Activated B cell treated with CpG ODN at 0.5 μM for 24 hours (primary cell): ENCODE measurements at regions of chr14 and their contacts with region 1.

Region 1: GRCh38 chr14:61694830-61695694 is at the start of gene HIF1A:
- DNase-seq: peak; percentile 87
- ATAC-seq: peak; percentile 95
- H3K4me3 Mint-ChIP-seq: peak within 1 kb of the TSS; percentile 97
- H3K27ac Mint-ChIP-seq: peak within 1 kb of the TSS; percentile 95
- H3K4me1 Mint-ChIP-seq: peaks cover 40% of the 10 kb centered on the region
- H3K27me3 Mint-ChIP-seq: no peaks in the 10 kb centered on the region
- CTCF ChIP-seq: no peak
- total RNA-seq, gene HIF1A: 148 and 179 TPM in 2 replicates

Region 2: DNA sequence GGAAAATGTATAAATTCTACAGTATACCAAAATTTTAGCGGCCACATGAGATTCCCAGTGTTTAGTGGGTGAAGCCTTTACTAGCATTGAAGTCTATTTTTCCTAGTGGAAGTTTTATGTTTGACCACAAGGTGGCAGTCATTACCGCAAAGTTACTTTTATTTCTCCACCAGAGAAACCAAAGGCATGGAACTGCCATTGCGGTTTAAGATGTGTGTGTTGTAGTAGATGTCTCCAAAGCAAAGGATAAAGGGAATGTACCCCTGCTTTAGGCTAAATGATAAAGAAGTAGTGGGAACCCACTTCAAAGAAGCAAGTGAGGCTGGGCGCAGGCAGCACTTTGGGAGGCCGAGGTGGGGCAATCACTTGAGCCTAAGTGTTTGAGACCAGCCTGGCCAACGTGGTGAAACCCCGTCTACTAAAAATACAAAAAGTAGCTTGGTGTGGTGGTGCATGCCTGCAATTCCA is 233.2 kb before region 1 on chr14:
- CTCF ChIA-PET with region 1: interaction called, 4 read pairs
- POLR2A ChIA-PET with region 1: no interaction called
- intact Hi-C with region 1: loop called (anchors 1 kb)
- DNase-seq: no peak
- ATAC-seq: peak; percentile 68
- H3K4me3 Mint-ChIP-seq: no peak overlapping the region
- H3K27ac Mint-ChIP-seq: no peak overlapping the region
- H3K4me1 Mint-ChIP-seq: peaks cover 16% of the 10 kb centered on the region
- H3K27me3 Mint-ChIP-seq: no peaks in the 10 kb centered on the region
- CTCF ChIP-seq: no peak

Region 3: DNA sequence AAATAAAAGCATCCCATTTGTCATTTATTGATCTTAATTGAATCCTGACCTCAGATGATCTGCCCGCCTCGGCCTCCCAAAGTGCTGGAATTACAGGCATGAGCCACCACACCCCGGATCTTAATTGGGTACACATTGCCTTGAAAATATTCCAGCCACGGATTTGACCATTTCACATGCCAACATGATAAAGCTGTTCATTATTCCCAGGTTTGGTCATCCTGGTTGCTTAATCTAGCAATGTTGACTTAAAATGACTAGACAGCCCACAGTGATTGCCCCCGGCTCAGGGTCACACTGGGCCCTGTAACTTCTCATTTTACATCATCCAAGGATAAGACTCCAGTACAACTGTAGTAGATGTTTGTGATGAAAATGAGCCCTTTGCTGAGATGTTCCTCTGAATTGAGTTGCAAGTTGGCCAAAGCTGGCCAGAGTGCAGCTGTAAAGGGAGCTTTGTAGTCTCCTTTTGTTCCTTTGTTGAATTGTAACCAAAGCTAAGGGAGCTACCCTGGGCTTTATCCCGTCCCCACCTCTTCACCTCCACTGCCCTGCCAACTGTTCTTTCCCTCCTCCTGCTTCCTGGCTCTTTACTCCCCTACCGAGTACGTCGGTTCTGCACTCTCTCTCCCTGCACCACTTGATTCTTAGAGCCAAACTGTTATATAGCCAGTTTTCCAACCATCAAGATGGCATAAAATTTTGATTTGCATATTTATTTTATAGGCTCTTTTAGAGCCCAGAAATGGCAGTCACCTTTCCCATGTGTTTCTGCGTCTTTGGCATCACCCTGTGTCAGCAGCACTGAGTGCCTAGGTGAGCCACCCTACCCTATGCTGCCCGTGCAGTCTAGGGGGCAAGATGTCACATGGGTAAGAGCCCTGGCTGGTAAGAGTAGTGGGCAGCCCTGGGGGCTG is 141.1 kb before region 1 on chr14:
- CTCF ChIA-PET with region 1: no interaction called
- POLR2A ChIA-PET with region 1: interaction called, 25 read pairs
- intact Hi-C with region 1: loop called (anchors 1 kb)
- DNase-seq: no peak
- ATAC-seq: no peak
- H3K4me3 Mint-ChIP-seq: peak overlapping the region; percentile 75
- H3K27ac Mint-ChIP-seq: peak overlapping the region; percentile 97
- H3K4me1 Mint-ChIP-seq: peaks cover 67% of the 10 kb centered on the region
- H3K27me3 Mint-ChIP-seq: no peaks in the 10 kb centered on the region
- CTCF ChIP-seq: no peak

Region 4: GRCh38 chr14:61614693-61615092 is 80.4 kb before region 1 on chr14:
- CTCF ChIA-PET with region 1: no interaction called
- POLR2A ChIA-PET with region 1: no interaction called
- intact Hi-C with region 1: no loop called
- DNase-seq: no peak
- ATAC-seq: no peak
- H3K4me3 Mint-ChIP-seq: no peak overlapping the region
- H3K27ac Mint-ChIP-seq: no peak overlapping the region
- H3K4me1 Mint-ChIP-seq: no peaks in the 10 kb centered on the region
- H3K27me3 Mint-ChIP-seq: no peaks in the 10 kb centered on the region
- CTCF ChIP-seq: no peak

Region 5: DNA sequence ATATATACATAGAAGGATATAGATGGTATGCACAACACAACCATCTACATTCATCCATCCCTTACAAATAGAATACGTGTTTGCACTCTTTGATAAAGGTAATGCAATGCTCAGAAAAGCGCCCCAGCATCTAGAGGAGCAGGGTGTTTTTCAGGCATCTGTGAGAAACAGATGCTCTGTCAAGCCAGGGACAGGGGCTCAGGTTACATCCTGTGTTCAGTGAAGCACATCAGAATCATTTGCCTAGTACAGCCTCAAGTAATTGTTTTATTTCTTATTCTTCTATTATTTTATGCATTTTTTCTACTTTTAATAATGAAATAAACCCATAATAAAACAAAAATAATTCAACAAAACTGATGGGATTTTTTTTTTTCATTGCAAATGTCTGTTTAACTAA is 50.2 kb before region 1 on chr14:
- CTCF ChIA-PET with region 1: no interaction called
- POLR2A ChIA-PET with region 1: interaction called, 3 read pairs
- intact Hi-C with region 1: loop called (anchors 1 kb)
- DNase-seq: no peak
- ATAC-seq: peak; percentile 79
- H3K4me3 Mint-ChIP-seq: no peak overlapping the region
- H3K27ac Mint-ChIP-seq: no peak overlapping the region
- H3K4me1 Mint-ChIP-seq: peaks cover 29% of the 10 kb centered on the region
- H3K27me3 Mint-ChIP-seq: no peaks in the 10 kb centered on the region
- CTCF ChIP-seq: no peak

Region 6: GRCh38 chr14:61678975-61679374 is 16.1 kb before region 1 on chr14:
- CTCF ChIA-PET with region 1: no interaction called
- POLR2A ChIA-PET with region 1: interaction called, 15 read pairs
- intact Hi-C with region 1: loop called (anchors 2 kb)
- DNase-seq: no peak
- ATAC-seq: no peak
- H3K4me3 Mint-ChIP-seq: no peak overlapping the region
- H3K27ac Mint-ChIP-seq: no peak overlapping the region
- H3K4me1 Mint-ChIP-seq: peaks cover 5% of the 10 kb centered on the region
- H3K27me3 Mint-ChIP-seq: no peaks in the 10 kb centered on the region
- CTCF ChIP-seq: no peak

Region 7: DNA sequence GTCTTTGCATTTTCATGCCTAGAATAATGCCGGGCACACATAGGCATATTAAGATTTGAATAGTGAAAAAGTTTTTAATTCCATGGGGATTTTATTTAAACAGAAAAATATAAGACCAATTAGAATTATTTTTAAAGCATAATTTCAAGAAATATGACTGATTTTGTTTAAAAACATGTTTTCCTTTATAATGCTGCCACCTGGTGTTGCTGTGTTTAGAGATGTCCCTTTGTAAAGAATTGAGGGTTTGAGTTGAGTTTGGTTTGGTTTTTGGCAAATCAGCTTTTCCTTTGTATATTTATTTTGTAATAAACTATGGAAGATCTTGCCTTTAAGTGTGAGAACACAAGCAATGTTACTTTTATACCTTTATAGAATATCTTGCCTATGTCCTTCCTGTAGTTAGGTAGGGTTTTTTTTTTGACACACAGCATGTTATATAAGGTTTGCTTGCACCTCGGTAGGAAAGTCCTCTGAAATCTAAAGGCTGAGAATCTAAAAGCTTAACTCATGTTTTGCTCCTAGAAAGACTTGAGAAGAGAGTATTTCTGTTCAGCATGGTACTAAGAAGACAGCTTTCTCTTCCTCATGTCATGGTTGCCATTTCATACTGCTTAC is 35.8 kb after region 1 on chr14:
- CTCF ChIA-PET with region 1: interaction called, 4 read pairs
- POLR2A ChIA-PET with region 1: interaction called, 5 read pairs
- intact Hi-C with region 1: loop called (anchors 5 kb)
- DNase-seq: no peak
- ATAC-seq: no peak
- H3K4me3 Mint-ChIP-seq: no peak overlapping the region
- H3K27ac Mint-ChIP-seq: peak overlapping the region; percentile 57
- H3K4me1 Mint-ChIP-seq: peaks cover 41% of the 10 kb centered on the region
- H3K27me3 Mint-ChIP-seq: no peaks in the 10 kb centered on the region
- CTCF ChIP-seq: no peak

Region 8: GRCh38 chr14:62081012-62081612 is 386.1 kb after region 1 on chr14:
- CTCF ChIA-PET with region 1: no interaction called
- POLR2A ChIA-PET with region 1: interaction called, 4 read pairs
- intact Hi-C with region 1: loop called (anchors 5 kb)
- DNase-seq: peak; percentile 44
- ATAC-seq: peak; percentile 69
- H3K4me3 Mint-ChIP-seq: peak overlapping the region; percentile 78
- H3K27ac Mint-ChIP-seq: peak overlapping the region; percentile 94
- H3K4me1 Mint-ChIP-seq: peaks cover 80% of the 10 kb centered on the region
- H3K27me3 Mint-ChIP-seq: no peaks in the 10 kb centered on the region
- CTCF ChIP-seq: no peak